ENCODE measurements at regions of chr13 and their contacts with region 1.

Region 1: GRCh38 chr13:34611671-34612070 is 330.4 kb upstream of the NBEA start:
- DNase-seq: no peak
- H3K4me3 ChIP-seq: no peak overlapping the region
- H3K4me3 Mint-ChIP-seq: no peak overlapping the region
- H3K27ac Mint-ChIP-seq: no peak overlapping the region
- H3K4me1 ChIP-seq: peaks cover 22% of the 10 kb centered on the region
- H3K4me1 Mint-ChIP-seq: peaks cover 19% of the 10 kb centered on the region
- H3K27me3 ChIP-seq: no peaks in the 10 kb centered on the region
- H3K27me3 Mint-ChIP-seq: no peaks in the 10 kb centered on the region
- CTCF ChIP-seq: no peak

Region 2: DNA sequence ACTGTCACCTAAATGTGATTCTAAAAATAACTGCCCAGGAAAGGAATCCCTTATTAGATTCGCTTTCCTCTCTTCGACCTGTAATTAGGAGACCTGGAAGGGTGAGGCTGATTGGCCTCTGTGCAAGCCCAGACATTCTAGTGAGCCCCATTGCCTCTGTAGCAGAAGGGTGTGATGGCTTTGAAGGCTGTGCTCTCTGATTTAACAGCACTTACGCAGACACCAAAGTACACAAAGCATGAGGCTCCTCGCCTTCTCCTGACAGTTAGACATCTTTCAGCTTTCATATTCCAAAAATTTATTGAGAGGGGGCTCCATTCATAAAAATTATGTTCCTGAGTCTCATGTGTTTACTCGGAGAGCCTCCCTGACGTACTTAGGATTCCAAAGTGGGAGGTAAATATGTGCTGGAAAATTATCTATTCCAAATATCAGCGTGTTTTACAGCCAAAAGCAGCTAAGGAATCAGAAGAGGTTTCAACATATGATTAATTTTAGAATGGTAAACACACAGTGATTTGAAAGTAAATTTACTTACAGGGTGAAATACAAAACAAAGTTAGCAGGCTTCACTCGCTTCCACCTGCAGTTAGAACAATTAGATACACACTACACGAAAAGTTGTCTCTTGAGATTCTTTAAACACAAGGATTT is 16.4 kb after region 1 on chr13:
- CTCF ChIA-PET with region 1: no interaction called
- POLR2A ChIA-PET with region 1: no interaction called
- intact Hi-C with region 1: loop called (anchors 2 kb)
- DNase-seq: peak; percentile 45 to 69
- H3K4me3 ChIP-seq: no peak overlapping the region
- H3K4me3 Mint-ChIP-seq: peak overlapping the region; percentile 58
- H3K27ac Mint-ChIP-seq: peak overlapping the region; percentile 5
- H3K4me1 ChIP-seq: peaks cover 29% of the 10 kb centered on the region
- H3K4me1 Mint-ChIP-seq: peaks cover 32% of the 10 kb centered on the region
- H3K27me3 ChIP-seq: no peaks in the 10 kb centered on the region
- H3K27me3 Mint-ChIP-seq: no peaks in the 10 kb centered on the region
- CTCF ChIP-seq: no peak